IMR-90 (cell line): ENCODE measurements at regions of chr10 and their contacts with region 1.

Region 1: GRCh38 chr10:61903221-61903927 is 1.9 kb downstream of the ARID5B start:
- DNase-seq: peak; percentile 55
- ATAC-seq: peak; percentile 43
- H3K4me3 ChIP-seq: peak overlapping the region; percentile 60
- H3K27ac ChIP-seq: peak overlapping the region; percentile 99
- H3K4me1 ChIP-seq: peaks cover 4% of the 10 kb centered on the region; the same call in 1 of the 2 replicates
- H3K27me3 ChIP-seq: no peaks in the 10 kb centered on the region
- CTCF ChIP-seq: 0 out of 2 replicates have a peak, but pooled peaks have one; percentile 11
- POLR2A ChIP-seq: no peak
- RAD21 ChIP-seq: peak; percentile 1; the same call in 1 of the 2 replicates

Region 2: GRCh38 chr10:61140765-61141392 is 762.5 kb before region 1 on chr10:
- CTCF ChIA-PET with region 1: no interaction called
- POLR2A ChIA-PET with region 1: no interaction called
- dilution Hi-C with region 1: no loop called
- in situ Hi-C with region 1: no loop called
- intact Hi-C with region 1: loop called (anchors 5 kb)
- DNase-seq: peak; percentile 77
- ATAC-seq: peak; percentile 84
- H3K4me3 ChIP-seq: no peak overlapping the region
- H3K27ac ChIP-seq: no peak overlapping the region
- H3K4me1 ChIP-seq: peaks cover 15% of the 10 kb centered on the region
- H3K27me3 ChIP-seq: 0 out of 2 replicates have a peak, but pooled peaks cover 1% of the 10 kb centered on the region
- CTCF ChIP-seq: peak; percentile 68
- POLR2A ChIP-seq: no peak
- RAD21 ChIP-seq: peak; percentile 66

Region 3: DNA sequence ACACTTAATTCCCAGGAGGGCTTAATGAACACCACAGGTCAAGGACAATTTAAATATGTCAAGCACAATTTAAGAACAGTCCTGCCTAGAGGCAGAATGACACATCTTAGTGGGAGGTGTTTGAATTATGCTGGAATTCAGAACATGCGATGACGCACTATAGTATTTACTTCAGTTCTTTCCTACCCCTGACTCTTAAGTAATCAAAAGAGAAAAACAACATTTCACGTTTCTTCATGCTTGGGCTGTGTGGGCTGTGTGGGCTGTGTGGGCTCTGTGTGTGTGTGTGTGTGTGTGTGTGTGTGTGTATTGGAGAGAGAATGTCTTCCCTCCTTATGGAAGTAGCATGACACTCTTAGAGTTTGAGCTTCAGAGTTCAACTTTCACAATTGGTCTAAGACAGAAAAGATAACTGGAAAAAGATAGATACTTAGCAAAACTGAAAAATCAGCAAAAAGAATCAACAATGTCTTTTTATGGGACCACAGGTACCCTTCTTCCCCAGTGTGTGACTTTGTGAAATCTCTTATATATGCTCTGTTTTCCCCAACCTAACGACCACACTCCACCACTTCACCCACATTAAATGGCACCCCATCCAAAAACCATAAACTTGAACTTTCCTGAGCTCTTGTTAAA is 274.4 kb before region 1 on chr10:
- CTCF ChIA-PET with region 1: no interaction called
- POLR2A ChIA-PET with region 1: no interaction called
- dilution Hi-C with region 1: no loop called
- in situ Hi-C with region 1: no loop called
- intact Hi-C with region 1: loop called (anchors 5 kb)
- DNase-seq: peak; percentile 95
- ATAC-seq: peak; percentile 87
- H3K4me3 ChIP-seq: no peak overlapping the region
- H3K27ac ChIP-seq: peak overlapping the region; percentile 98
- H3K4me1 ChIP-seq: peaks cover 22% of the 10 kb centered on the region
- H3K27me3 ChIP-seq: no peaks in the 10 kb centered on the region
- CTCF ChIP-seq: no peak
- POLR2A ChIP-seq: no peak
- RAD21 ChIP-seq: no peak

Region 4: DNA sequence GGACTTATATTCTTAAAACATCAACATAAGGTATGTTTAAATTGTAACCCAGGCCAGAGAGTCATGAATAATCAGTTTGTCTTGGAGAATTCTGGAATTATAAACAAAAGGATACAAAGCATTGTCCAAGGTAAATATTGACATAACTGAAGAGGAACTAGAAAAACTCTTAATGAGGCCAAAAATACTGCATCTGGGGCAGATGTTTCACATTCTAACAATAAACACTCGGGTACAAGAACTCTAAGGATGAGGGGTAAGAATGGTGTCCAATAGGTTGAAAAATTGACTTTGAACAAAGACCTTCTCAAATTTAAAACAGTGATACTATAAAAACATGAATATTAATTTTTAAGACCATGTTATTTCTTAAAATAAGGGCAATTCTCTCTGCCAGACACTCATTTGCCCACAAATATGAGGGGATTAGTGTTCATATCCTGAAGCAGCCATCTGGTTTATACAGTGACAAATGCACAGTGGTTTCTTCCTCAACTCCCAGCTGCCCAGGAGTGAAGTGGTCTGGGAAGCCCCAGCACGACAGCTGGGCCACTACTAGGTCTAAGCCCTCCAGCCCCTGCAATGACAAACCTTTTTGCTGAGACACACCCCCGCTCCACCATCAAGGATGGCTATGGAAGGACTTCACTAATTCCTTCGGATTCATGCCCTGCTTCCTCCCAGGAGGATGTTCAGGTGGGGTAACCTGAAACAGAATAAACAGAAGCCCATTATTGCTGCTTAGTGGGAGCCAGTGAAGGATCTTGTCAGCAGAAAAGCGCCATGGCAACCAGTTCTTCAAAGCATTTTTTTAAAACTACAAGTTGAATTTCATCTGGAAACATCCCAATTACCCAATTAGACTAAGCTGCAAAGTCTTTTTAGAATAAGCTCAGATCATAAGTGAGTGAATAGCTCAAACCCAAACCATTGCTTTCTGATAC is 109.3 kb before region 1 on chr10:
- CTCF ChIA-PET with region 1: no interaction called
- POLR2A ChIA-PET with region 1: no interaction called
- dilution Hi-C with region 1: no loop called
- in situ Hi-C with region 1: no loop called
- intact Hi-C with region 1: loop called (anchors 5 kb)
- DNase-seq: peak; percentile 79
- ATAC-seq: peak; percentile 41
- H3K4me3 ChIP-seq: no peak overlapping the region
- H3K27ac ChIP-seq: peak overlapping the region; percentile 80
- H3K4me1 ChIP-seq: peaks cover 19% of the 10 kb centered on the region
- H3K27me3 ChIP-seq: no peaks in the 10 kb centered on the region
- CTCF ChIP-seq: no peak
- POLR2A ChIP-seq: no peak
- RAD21 ChIP-seq: no peak

Region 5: DNA sequence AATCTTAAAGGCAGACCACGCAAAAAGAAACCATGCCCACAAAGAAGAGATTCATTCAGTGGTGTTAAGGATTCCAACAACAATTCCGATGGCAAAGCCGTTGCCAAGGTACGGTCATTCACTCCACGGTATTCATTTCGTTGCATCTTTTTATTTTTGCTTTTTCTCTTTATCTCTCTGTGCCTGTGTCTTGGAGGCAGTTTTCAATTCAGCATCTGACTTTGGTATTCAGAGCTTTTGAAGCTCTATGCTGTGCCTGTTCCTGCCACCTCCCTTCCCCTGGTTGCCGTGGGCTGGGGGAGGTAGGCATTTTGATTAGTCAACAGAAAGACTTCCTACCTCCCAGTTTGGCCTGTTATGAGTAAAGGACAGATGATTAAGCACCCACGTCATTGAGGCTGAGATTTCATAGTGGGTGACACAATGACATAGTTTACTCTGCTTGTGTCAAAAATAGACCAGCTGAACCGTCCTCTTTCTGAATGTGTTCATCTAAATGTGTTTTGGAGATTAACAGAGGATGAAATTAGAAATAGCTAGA is 147.6 kb after region 1 on chr10:
- CTCF ChIA-PET with region 1: no interaction called
- POLR2A ChIA-PET with region 1: interaction called, 14 read pairs
- dilution Hi-C with region 1: no loop called
- in situ Hi-C with region 1: loop called (anchors 5 kb)
- intact Hi-C with region 1: loop called (anchors 2 kb)
- DNase-seq: peak; percentile 96
- ATAC-seq: peak; percentile 35
- H3K4me3 ChIP-seq: peak overlapping the region; percentile 62
- H3K27ac ChIP-seq: peak overlapping the region; percentile 83
- H3K4me1 ChIP-seq: peaks cover 22% of the 10 kb centered on the region
- H3K27me3 ChIP-seq: no peaks in the 10 kb centered on the region
- CTCF ChIP-seq: no peak
- POLR2A ChIP-seq: peak; percentile 94
- RAD21 ChIP-seq: no peak

Region 6: DNA sequence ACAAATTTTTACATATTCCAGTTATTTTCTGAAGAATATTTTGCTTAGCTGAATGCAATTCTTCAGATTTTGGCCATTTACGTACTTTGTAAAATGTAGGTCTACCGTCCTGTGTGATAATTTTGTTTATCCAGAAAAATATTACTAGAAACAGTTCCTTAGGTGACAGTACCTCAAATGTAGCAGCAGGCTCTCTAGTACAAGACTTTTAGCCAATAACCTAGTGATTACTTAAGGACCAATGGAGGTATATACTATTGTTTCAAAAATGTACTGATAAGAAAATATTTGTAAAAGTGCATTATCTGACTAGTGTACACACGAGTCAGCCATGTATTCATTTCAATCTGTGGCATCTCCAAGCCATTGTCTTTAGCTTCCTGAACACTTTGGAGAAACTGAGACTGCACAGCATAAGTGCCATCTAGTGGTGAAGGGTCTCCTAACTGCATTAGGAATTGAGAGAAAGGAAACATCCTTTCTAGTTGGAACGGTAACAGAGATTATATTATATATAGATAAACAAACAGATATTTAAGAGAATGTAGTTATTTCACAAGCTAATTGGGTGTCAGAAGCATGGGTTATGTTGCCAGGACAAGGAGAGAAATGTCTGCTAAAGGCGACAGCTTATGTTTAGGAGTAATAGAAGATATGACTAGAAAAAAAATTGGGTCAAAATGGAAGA is 341.6 kb after region 1 on chr10:
- CTCF ChIA-PET with region 1: interaction called, 7 read pairs
- POLR2A ChIA-PET with region 1: interaction called, 5 read pairs
- dilution Hi-C with region 1: no loop called
- in situ Hi-C with region 1: no loop called
- intact Hi-C with region 1: loop called (anchors 1 kb)
- DNase-seq: peak; percentile 83
- ATAC-seq: peak; percentile 63
- H3K4me3 ChIP-seq: no peak overlapping the region; the same call in 1 of the 2 replicates
- H3K27ac ChIP-seq: peak overlapping the region; percentile 92
- H3K4me1 ChIP-seq: peaks cover 6% of the 10 kb centered on the region
- H3K27me3 ChIP-seq: no peaks in the 10 kb centered on the region
- CTCF ChIP-seq: peak; percentile 88
- POLR2A ChIP-seq: no peak
- RAD21 ChIP-seq: peak; percentile 93